Activated CD4-positive, alpha-beta T cell treated with anti-CD3 and anti-CD28 coated beads, Interleukin-2, amount 10 ng/mL, durations not matched to agents 24 days and 14 days (primary cell): ENCODE measurements at regions of chr16 and their contacts with region 1.

Region 1: GRCh38 chr16:47574091-47575054 is 113.2 kb downstream of the PHKB start:
- DNase-seq: peak; percentile 72
- H3K4me3 Mint-ChIP-seq: peak overlapping the region; percentile 53
- H3K27ac Mint-ChIP-seq: peak overlapping the region; percentile 38
- H3K4me1 Mint-ChIP-seq: peaks cover 55% of the 10 kb centered on the region
- H3K27me3 Mint-ChIP-seq: no peaks in the 10 kb centered on the region

Region 2: DNA sequence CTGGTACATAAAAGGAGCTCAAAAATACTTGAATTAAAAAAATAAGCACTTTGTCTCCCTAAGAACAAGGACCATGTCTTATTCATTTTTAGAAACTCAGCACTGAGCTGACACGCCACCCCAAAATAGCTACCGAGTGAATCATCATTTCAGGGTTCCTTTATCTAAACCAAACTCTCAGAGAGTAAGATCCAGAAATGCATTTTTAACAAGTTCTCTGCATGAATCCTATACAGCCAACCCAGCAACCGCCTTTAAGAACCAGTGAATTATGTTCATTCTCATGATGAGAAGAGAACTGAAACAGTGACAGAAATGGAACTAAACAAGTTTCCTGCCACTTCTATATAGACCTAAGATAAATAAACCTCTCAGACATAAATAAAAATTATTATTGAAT is 752.1 kb before region 1 on chr16:
- intact Hi-C with region 1: loop called (anchors 10 kb)
- DNase-seq: peak; percentile 65
- H3K4me3 Mint-ChIP-seq: no peak overlapping the region
- H3K27ac Mint-ChIP-seq: no peak overlapping the region
- H3K4me1 Mint-ChIP-seq: peaks cover 26% of the 10 kb centered on the region
- H3K27me3 Mint-ChIP-seq: no peaks in the 10 kb centered on the region

Region 3: GRCh38 chr16:47110939-47111338 is 463.4 kb before region 1 on chr16:
- intact Hi-C with region 1: loop called (anchors 1 kb)
- DNase-seq: no peak
- H3K4me3 Mint-ChIP-seq: no peak overlapping the region
- H3K27ac Mint-ChIP-seq: no peak overlapping the region
- H3K4me1 Mint-ChIP-seq: peaks cover 10% of the 10 kb centered on the region
- H3K27me3 Mint-ChIP-seq: no peaks in the 10 kb centered on the region

Region 4: GRCh38 chr16:47323241-47323640 is 251.1 kb before region 1 on chr16:
- intact Hi-C with region 1: no loop called
- DNase-seq: no peak
- H3K4me3 Mint-ChIP-seq: no peak overlapping the region
- H3K27ac Mint-ChIP-seq: no peak overlapping the region
- H3K4me1 Mint-ChIP-seq: no peaks in the 10 kb centered on the region
- H3K27me3 Mint-ChIP-seq: no peaks in the 10 kb centered on the region

Region 5: GRCh38 chr16:47492428-47493377 is 81.7 kb before region 1 on chr16:
- intact Hi-C with region 1: no loop called
- DNase-seq: no peak
- H3K4me3 Mint-ChIP-seq: peak overlapping the region; percentile 70
- H3K27ac Mint-ChIP-seq: peak overlapping the region; percentile 54
- H3K4me1 Mint-ChIP-seq: peaks cover 15% of the 10 kb centered on the region
- H3K27me3 Mint-ChIP-seq: no peaks in the 10 kb centered on the region

Region 6: DNA sequence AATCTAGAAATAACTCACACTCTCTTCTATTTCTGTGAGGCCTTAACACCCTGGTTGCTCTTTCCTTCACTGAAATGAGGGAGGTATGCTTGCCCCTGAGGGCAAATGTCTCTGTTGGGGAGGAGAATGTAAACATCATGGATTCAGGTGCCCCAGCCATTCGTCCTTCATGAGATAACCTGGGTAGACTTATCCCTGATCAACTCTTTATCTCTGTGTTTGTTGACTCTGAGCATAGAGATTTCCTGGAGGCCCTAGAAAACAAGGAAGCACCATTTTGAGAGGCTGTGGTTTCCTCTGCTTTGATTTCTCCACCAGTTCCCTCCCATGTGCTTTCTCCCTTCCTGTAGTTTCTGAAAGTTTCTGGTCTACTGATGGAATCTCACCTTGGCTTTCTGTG is 35.9 kb before region 1 on chr16:
- intact Hi-C with region 1: loop called (anchors 5 kb)
- DNase-seq: no peak
- H3K4me3 Mint-ChIP-seq: no peak overlapping the region
- H3K27ac Mint-ChIP-seq: peak overlapping the region; percentile 8
- H3K4me1 Mint-ChIP-seq: peaks cover 6% of the 10 kb centered on the region
- H3K27me3 Mint-ChIP-seq: no peaks in the 10 kb centered on the region

Region 7: DNA sequence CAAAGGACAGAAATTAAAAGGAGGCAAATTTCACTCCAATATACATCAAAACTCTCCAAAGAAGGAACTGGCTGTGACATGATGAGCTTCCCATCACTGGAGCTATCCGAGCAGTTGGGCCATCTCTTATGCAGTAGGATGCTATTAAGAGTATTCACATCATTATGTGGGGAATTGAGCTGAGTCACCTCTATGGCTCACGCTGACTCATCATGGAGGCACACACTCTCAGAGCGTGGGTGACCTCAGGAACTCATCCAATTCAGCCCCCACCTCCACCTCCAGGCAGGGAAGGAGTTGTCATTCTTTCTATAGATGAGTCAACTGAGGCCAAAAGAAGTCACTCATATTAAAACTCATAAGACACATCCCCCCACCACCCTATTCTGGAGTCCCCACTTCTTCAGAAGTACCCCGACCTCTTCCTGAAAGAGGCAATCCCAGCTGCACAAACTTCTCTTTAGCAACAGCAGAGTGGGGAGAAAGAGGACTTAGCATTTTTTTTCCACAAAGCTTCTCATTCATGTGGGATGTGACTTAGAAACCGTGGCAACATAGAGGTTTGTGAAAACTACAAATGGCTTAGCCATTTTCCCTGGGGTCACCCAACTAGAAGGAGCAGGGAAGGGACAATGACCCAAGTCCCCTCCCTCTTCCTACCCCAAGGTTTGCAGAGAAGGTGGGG is 548.9 kb after region 1 on chr16:
- intact Hi-C with region 1: loop called (anchors 1 kb)
- DNase-seq: peak; percentile 69
- H3K4me3 Mint-ChIP-seq: peak overlapping the region; percentile 21
- H3K27ac Mint-ChIP-seq: peak overlapping the region; percentile 79
- H3K4me1 Mint-ChIP-seq: peaks cover 25% of the 10 kb centered on the region
- H3K27me3 Mint-ChIP-seq: no peaks in the 10 kb centered on the region